ENCODE measurements at regions of chr9 and their contacts with region 1.

Region 1: DNA sequence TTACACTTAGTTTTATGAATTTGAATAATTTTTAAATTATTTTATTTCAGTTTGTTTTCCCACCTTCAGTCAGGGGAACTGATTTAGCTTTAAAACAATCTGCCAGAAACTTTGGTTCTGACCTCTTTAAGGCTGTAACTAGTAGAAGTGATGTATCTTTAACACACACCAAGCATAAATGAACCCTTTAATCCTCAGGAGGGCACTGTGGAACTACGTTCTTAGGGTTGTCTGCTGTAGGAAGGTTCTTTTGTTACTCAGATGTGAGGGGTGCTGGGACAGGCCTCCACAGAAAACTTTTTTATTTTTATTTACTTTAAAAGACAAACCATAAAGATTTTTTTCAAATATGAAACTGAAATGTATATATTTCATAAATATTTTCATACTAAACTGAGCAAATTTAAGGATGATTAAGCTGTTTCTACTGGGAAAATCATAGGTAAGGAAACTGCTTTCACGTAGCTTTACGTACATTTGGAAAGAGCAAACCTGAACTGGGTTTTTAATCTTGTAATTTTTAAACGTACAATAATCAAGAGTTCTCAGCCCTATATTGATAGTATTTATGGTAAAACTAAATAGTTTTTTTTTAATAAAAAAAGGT is 5.3 kb downstream of the KLF4 start:
- DNase-seq: no peak
- H3K4me3 ChIP-seq: peak overlapping the region in 1 of 4 donors; percentile 5
- H3K27ac ChIP-seq: peak overlapping the region in 3 of 4 donors; percentile 21 to 96 (median 96)
- H3K4me1 ChIP-seq: peaks cover 0 to 28% (median 13%) of the 10 kb centered on the region in 4 donors
- H3K27me3 ChIP-seq: no peaks in the 10 kb centered on the region
- CTCF ChIP-seq: peak; percentile 39 to 55 (median 46)
- EP300 ChIP-seq: no peak
- POLR2A ChIP-seq: no peak

Region 2: GRCh38 chr9:108565651-108566378 is 1081.6 kb after region 1 on chr9:
- intact Hi-C with region 1: loop called (anchors 2 kb)
- DNase-seq: peak; percentile 72
- H3K4me3 ChIP-seq: no peak overlapping the region
- H3K27ac ChIP-seq: no peak overlapping the region
- H3K4me1 ChIP-seq: peaks cover 0 to 6% (median 2%) of the 10 kb centered on the region in 4 donors
- H3K27me3 ChIP-seq: no peaks in the 10 kb centered on the region
- CTCF ChIP-seq: peak; percentile 63 to 83 (median 78)
- EP300 ChIP-seq: no peak
- POLR2A ChIP-seq: no peak

Region 3: DNA sequence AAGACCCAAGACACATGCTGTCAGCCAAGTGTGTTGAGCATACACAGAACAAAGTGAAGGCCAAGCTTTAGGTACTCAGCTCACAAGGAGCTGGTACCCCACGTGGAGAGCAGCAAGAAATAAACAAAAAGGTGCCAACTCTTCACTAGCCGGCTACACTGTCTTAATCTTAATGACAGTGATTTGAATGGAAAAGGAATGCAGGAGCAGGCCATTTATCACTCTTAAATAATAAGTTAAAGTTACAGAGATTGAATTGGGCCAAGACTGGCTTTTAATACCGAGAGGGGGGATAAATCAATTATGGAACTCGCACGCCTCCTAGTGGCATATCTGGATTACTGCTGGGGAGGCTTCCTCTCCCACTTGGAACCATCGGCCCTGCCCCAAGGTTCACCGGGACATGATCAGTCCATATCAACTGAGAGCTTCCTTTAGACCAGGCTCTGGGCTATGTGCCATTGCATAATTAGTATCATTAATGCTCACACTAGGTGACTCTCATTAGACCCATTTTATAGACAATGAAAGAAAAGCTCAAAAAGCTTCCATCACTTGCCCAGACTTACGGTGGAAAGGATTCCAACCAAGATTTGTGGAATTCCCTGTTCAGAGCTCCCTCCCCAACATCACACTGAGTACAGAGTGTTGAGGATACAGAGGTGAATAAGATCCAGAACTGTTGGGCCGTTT is 1277.6 kb after region 1 on chr9:
- intact Hi-C with region 1: loop called (anchors 5 kb)
- DNase-seq: peak; percentile 69
- H3K4me3 ChIP-seq: no peak overlapping the region
- H3K27ac ChIP-seq: no peak overlapping the region
- H3K4me1 ChIP-seq: peaks cover 0 to 12% (median 8%) of the 10 kb centered on the region in 4 donors
- H3K27me3 ChIP-seq: no peaks in the 10 kb centered on the region
- CTCF ChIP-seq: peak; percentile 35 to 80 (median 62)
- EP300 ChIP-seq: no peak
- POLR2A ChIP-seq: no peak

Measured in sigmoid colon (tissue), 7 donors.